ENCODE measurements at regions of chr1 and their contacts with region 1.

Region 1: DNA sequence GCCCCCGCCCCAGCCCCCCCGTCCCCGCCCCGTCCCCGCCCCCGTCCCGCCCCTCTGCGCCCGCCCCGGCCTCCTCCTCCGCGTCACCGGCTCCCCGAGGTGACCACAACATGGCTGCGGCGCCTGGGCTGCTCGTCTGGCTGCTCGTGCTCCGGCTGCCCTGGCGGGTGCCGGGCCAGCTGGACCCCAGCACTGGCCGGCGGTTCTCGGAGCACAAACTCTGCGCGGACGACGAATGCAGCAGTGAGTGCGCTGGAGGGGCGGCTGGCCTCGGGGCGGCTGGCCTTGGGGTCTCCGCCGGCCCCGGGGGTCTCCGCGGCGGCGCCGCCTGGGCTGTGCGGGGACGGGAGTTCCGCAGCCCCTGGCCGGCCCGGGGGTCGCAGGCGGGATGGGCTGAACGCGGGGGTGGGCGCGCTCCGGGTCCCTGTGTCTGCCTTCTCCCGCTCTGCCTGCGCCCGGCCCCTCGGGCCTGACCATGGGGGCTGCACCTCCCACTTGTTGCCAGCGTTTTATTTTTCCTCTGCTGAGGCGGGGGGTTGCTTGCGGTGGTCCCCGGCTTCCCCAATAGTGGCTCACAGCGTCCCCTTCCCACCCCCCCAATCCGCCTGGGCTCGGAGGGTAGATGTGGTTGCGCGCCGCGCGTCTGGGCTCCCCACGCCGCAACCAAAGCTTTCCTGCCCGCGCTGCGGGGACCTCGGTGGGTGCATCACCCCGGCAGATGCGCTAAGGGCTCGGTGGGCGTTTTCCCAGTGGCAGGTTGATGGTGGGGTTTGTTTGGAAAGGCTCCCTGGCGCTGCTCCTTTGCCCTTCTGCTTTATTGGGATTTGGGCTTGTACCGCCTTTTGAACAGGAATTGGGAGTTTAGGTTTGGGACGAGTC is at the start of gene MIA3:
- DNase-seq: no peak
- ATAC-seq: peak; percentile 77
- H3K4me3 ChIP-seq: peak within 1 kb of the TSS; percentile 67 to 79
- H3K27ac ChIP-seq: peak within 1 kb of the TSS; percentile 55; the same call in 1 of the 2 replicates
- H3K4me1 ChIP-seq: peaks cover 2 to 16% of the 10 kb centered on the region in 2 experiments; a peak in 3 of 4 replicates
- H3K27me3 ChIP-seq: no peaks in the 10 kb centered on the region
- CTCF ChIP-seq: no peak
- POLR2A ChIP-seq: no peak
- RAD21 ChIP-seq: no peak
- total RNA-seq, gene MIA3: 62.7 TPM

Region 2: GRCh38 chr1:222117809-222118208 is 500.4 kb before region 1 on chr1:
- CTCF ChIA-PET with region 1: no interaction called
- POLR2A ChIA-PET with region 1: no interaction called
- RAD21 ChIA-PET with region 1: no interaction called
- intact Hi-C with region 1: no loop called
- DNase-seq: no peak
- ATAC-seq: no peak
- H3K4me3 ChIP-seq: no peak overlapping the region
- H3K27ac ChIP-seq: no peak overlapping the region
- H3K4me1 ChIP-seq: no peaks in the 10 kb centered on the region
- H3K27me3 ChIP-seq: no peaks in the 10 kb centered on the region
- CTCF ChIP-seq: no peak
- POLR2A ChIP-seq: no peak
- RAD21 ChIP-seq: no peak

Region 3: GRCh38 chr1:222634180-222635013 is 16.2 kb after region 1 on chr1:
- CTCF ChIA-PET with region 1: interaction called, 15 read pairs
- POLR2A ChIA-PET with region 1: no interaction called
- RAD21 ChIA-PET with region 1: no interaction called
- intact Hi-C with region 1: no loop called
- DNase-seq: peak; percentile 85
- ATAC-seq: peak; percentile 81
- H3K4me3 ChIP-seq: no peak overlapping the region
- H3K27ac ChIP-seq: no peak overlapping the region
- H3K4me1 ChIP-seq: no peaks in the 10 kb centered on the region
- H3K27me3 ChIP-seq: no peaks in the 10 kb centered on the region
- CTCF ChIP-seq: peak; percentile 79 to 89 (median 85)
- POLR2A ChIP-seq: no peak
- RAD21 ChIP-seq: peak; percentile 83

Region 4: DNA sequence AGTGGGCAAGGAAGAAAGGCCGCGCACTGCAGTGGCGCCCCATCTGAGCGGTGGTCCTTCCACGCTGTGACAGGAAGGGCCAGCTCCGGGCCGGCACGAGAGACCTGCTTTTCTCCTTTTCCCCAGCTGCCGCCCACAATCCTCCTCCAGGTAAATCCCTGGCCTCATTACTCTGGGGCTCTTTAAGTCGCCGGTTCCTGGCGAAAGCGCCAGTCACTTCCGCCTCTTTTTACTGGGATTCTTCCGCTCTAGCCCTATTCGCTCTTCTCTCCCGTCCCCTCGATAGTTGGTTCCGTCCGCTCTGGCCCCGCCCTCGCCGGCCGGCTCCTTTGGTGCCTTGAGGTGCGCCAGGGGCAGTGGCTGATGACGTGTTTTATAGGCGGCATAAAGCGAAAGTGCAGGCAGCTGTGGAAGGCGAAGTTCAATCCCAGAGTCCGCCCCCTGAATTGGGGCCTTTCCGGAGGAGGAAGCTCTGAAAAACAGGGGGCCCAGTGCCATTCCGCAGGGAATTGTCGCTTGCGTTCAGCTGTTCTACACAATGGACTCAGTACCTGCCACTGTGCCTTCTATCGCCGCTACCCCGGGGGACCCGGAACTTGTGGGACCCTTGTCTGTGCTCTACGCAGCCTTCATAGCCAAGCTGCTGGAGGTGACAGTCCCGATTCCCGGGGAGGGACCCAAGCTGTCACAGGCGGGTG is 25.8 kb after region 1 on chr1:
- CTCF ChIA-PET with region 1: no interaction called
- POLR2A ChIA-PET with region 1: no interaction called
- RAD21 ChIA-PET with region 1: no interaction called
- intact Hi-C with region 1: loop called (anchors 1 kb)
- DNase-seq: peak; percentile 98
- ATAC-seq: peak; percentile 93
- H3K4me3 ChIP-seq: peak overlapping the region; percentile 84 to 96
- H3K27ac ChIP-seq: peak overlapping the region; percentile 82
- H3K4me1 ChIP-seq: peaks cover 2 to 13% of the 10 kb centered on the region in 2 experiments; a peak in 2 of 4 replicates
- H3K27me3 ChIP-seq: no peaks in the 10 kb centered on the region
- CTCF ChIP-seq: no peak
- POLR2A ChIP-seq: no peak
- RAD21 ChIP-seq: no peak; the same call in 1 of the 2 replicates

Measured in HCT116 (cell line).